Tibial artery (tissue), 4 donors: ENCODE measurements at regions of chr3 and their contacts with region 1.

Region 1: DNA sequence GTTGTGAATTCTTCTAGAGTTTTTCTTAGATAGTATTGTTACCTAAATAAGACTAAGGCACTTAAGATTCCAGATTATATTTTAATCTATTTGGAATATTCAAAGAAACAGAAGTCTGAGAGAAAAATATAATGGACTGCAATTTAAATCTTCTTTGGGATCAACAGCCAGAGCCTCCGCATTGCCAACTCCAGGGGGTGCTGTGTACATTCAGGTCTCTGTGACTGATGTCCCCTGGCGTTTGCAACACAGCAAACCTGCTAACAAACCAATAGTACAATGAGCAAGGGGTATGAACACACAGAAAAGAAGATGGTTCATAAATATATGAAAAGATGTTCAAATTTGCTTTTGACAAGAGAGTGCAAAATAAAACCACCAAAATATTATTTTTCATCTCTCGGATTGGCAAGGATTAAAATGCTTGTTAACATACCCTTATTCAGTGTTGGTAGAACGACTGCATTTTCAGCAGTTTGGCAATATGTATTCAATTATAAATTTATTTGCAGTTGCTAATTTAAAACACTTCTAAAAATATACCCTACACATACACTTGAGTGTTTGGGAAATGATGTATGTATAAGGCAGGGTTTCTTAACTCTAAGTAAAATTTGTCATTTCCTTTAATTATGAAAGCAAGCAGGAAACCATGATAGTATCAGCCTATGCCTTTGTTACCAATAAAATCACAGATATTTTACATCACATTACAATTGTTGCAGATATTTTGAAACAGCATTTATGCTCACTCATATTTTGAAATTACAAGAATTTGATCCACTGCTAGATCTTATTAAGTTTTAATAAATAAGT is 16.1 kb upstream of the TM4SF1 start:
- DNase-seq: peak; percentile 66 to 81
- H3K4me3 ChIP-seq: no peak overlapping the region
- H3K27ac ChIP-seq: peak overlapping the region; percentile 11 to 19
- H3K4me1 ChIP-seq: peaks cover 0 to 36% (median 23%) of the 10 kb centered on the region in 4 donors
- H3K27me3 ChIP-seq: no peaks in the 10 kb centered on the region
- CTCF ChIP-seq: peak; percentile 82 to 86

Region 2: GRCh38 chr3:149480325-149481017 is 86.9 kb after region 1 on chr3:
- intact Hi-C with region 1: loop called (anchors 2 kb)
- DNase-seq: peak; percentile 82 to 91
- H3K4me3 ChIP-seq: no peak overlapping the region
- H3K27ac ChIP-seq: peak overlapping the region; percentile 73 to 76
- H3K4me1 ChIP-seq: peaks cover 0 to 31% (median 23%) of the 10 kb centered on the region in 4 donors
- H3K27me3 ChIP-seq: no peaks in the 10 kb centered on the region
- CTCF ChIP-seq: peak; percentile 83 to 86